ENCODE measurements at regions of chr1 and their contacts with region 1.

Region 1: GRCh38 chr1:186806477-186806876 is 22.3 kb upstream of the PLA2G4A start:
- DNase-seq: peak; percentile 70
- H3K4me3 Mint-ChIP-seq: no peak overlapping the region
- H3K27ac Mint-ChIP-seq: no peak overlapping the region
- H3K4me1 Mint-ChIP-seq: peaks cover 9% of the 10 kb centered on the region
- H3K27me3 Mint-ChIP-seq: no peaks in the 10 kb centered on the region
- CTCF ChIP-seq: peak; percentile 63

Region 2: GRCh38 chr1:186404454-186405051 is 401.9 kb before region 1 on chr1:
- CTCF ChIA-PET with region 1: interaction called, 5 read pairs
- intact Hi-C with region 1: loop called (anchors 10 kb)
- DNase-seq: peak; percentile 13
- H3K4me3 Mint-ChIP-seq: no peak overlapping the region
- H3K27ac Mint-ChIP-seq: no peak overlapping the region
- H3K4me1 Mint-ChIP-seq: no peaks in the 10 kb centered on the region
- H3K27me3 Mint-ChIP-seq: no peaks in the 10 kb centered on the region
- CTCF ChIP-seq: peak; percentile 59

Region 3: DNA sequence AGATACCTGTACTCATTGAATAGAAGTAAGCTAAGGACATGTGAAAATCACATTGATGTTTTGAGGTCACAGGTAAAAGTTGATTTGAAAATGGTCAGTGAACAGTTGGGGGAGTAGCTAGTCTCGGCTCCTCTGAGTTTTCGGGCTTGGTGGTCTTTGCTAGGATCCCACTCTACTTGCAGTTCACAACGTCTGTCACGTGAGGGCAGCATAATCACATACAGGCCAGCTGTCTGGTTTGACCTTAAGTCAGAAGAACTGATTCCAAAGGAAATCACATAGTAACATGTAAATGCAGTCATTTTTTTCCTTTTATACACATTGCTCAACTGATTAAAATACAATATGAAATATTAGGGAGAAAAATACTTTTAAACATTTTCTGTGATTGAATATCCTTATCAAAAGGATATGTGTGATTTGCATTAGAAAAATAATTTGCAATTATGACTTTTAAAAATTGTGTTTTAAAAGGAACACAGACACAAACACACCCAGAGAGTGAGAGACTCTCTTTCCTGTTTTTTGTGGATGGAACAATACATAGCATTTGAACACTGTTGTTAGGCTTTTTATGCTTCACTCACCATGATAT is 323.7 kb before region 1 on chr1:
- CTCF ChIA-PET with region 1: interaction called, 5 read pairs
- intact Hi-C with region 1: loop called (anchors 1 kb)
- DNase-seq: peak; percentile 78
- H3K4me3 Mint-ChIP-seq: no peak overlapping the region
- H3K27ac Mint-ChIP-seq: no peak overlapping the region
- H3K4me1 Mint-ChIP-seq: peaks cover 28% of the 10 kb centered on the region
- H3K27me3 Mint-ChIP-seq: no peaks in the 10 kb centered on the region
- CTCF ChIP-seq: peak; percentile 97

Region 4: GRCh38 chr1:186605762-186606350 is 200.6 kb before region 1 on chr1:
- CTCF ChIA-PET with region 1: interaction called, 22 read pairs
- intact Hi-C with region 1: loop called (anchors 1 kb)
- DNase-seq: peak; percentile 76
- H3K4me3 Mint-ChIP-seq: no peak overlapping the region
- H3K27ac Mint-ChIP-seq: peak overlapping the region; percentile 51
- H3K4me1 Mint-ChIP-seq: peaks cover 26% of the 10 kb centered on the region
- H3K27me3 Mint-ChIP-seq: no peaks in the 10 kb centered on the region
- CTCF ChIP-seq: peak; percentile 89

Region 5: DNA sequence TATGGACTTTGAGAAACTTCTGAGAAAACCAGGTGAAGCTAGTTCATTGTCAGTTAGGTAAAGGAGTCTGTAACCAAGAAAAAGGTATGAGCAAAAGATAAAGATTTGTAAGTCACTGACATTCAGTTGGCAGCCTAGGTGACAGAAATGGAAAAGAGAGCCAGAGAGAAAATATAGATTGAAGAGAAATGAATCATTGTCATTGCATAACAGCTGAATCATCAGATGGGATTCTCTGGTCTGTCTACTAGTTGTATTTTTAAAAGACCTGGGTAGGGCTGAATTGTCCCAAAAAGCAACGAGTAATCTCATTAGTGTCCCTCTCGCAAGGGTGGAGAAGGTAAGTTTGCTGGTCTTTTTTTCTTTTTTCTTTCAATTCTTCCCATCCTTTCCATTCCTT is 162.9 kb before region 1 on chr1:
- CTCF ChIA-PET with region 1: no interaction called
- intact Hi-C with region 1: no loop called
- DNase-seq: no peak
- H3K4me3 Mint-ChIP-seq: no peak overlapping the region
- H3K27ac Mint-ChIP-seq: peak overlapping the region; percentile 22
- H3K4me1 Mint-ChIP-seq: peaks cover 27% of the 10 kb centered on the region
- H3K27me3 Mint-ChIP-seq: no peaks in the 10 kb centered on the region
- CTCF ChIP-seq: no peak

Region 6: DNA sequence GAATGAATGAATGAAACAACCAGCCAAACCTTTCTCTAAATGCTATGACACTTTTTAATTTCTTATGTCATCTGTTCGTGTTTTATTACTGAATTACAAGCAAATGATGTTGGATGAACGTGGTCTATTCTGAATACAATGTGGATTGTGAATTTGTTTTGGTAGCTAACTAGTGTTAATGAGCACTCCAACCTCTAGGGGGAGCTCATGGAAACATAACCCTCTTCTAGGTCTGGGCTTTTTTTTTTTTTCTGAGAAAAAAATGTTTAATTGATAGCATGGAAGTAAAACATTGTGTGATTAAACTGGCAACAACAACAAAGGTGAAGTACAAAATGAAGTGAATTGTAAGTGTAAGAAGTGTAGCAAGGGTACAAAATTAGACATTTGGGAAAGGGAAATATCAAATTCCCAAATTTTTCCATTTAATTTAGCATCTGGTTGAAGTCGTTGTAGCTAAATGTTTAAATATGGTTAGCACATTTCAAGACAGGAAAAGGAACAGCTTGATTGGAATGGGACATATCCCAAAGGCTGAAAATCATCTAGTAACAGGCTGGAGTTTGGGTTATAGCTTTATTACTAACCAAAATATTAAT is 83.7 kb before region 1 on chr1:
- CTCF ChIA-PET with region 1: interaction called, 40 read pairs
- intact Hi-C with region 1: loop called (anchors 1 kb)
- DNase-seq: peak; percentile 58
- H3K4me3 Mint-ChIP-seq: no peak overlapping the region
- H3K27ac Mint-ChIP-seq: no peak overlapping the region
- H3K4me1 Mint-ChIP-seq: no peaks in the 10 kb centered on the region
- H3K27me3 Mint-ChIP-seq: no peaks in the 10 kb centered on the region
- CTCF ChIP-seq: peak; percentile 31

Region 7: GRCh38 chr1:186763107-186763506 is 43.4 kb before region 1 on chr1:
- CTCF ChIA-PET with region 1: no interaction called
- intact Hi-C with region 1: no loop called
- DNase-seq: no peak
- H3K4me3 Mint-ChIP-seq: no peak overlapping the region
- H3K27ac Mint-ChIP-seq: peak overlapping the region; percentile 7
- H3K4me1 Mint-ChIP-seq: peaks cover 23% of the 10 kb centered on the region
- H3K27me3 Mint-ChIP-seq: no peaks in the 10 kb centered on the region
- CTCF ChIP-seq: no peak

Region 8: GRCh38 chr1:186849271-186849671 is 42.8 kb after region 1 on chr1:
- CTCF ChIA-PET with region 1: no interaction called
- intact Hi-C with region 1: no loop called
- DNase-seq: peak; percentile 73
- H3K4me3 Mint-ChIP-seq: peak overlapping the region; percentile 37
- H3K27ac Mint-ChIP-seq: peak overlapping the region; percentile 88
- H3K4me1 Mint-ChIP-seq: peaks cover 39% of the 10 kb centered on the region
- H3K27me3 Mint-ChIP-seq: no peaks in the 10 kb centered on the region
- CTCF ChIP-seq: no peak

Region 9: DNA sequence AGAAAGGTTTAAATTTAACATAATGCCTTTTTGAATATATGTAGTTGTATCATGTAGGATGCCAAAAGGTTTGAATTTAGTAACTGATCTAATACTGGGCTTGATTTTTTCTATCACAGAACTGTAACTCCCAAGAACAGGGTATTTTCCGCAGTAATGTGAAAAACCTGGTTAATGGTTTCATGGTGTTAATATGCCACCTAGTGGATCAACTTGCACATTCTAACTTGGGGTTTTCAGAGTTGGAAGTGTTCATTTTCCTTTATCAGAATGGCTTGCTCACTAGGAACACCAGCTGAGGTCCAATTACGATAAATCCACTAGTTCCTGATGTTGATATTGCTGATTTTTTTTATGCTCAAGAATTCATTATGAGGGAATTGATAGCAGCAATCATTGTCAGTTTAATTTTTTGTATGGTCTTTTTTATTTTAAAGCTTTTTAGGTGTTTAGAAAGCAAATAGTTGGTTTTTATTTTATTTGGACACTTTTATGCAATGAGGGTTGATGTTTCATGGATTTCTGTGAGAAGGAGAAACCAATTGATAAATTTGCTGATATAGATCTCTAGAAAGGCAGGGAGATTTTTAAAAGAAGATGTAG is 179.5 kb after region 1 on chr1:
- CTCF ChIA-PET with region 1: no interaction called
- intact Hi-C with region 1: loop called (anchors 5 kb)
- DNase-seq: peak; percentile 35
- H3K4me3 Mint-ChIP-seq: no peak overlapping the region
- H3K27ac Mint-ChIP-seq: peak overlapping the region; percentile 37
- H3K4me1 Mint-ChIP-seq: peaks cover 19% of the 10 kb centered on the region
- H3K27me3 Mint-ChIP-seq: no peaks in the 10 kb centered on the region
- CTCF ChIP-seq: peak; percentile 60

Region 10: DNA sequence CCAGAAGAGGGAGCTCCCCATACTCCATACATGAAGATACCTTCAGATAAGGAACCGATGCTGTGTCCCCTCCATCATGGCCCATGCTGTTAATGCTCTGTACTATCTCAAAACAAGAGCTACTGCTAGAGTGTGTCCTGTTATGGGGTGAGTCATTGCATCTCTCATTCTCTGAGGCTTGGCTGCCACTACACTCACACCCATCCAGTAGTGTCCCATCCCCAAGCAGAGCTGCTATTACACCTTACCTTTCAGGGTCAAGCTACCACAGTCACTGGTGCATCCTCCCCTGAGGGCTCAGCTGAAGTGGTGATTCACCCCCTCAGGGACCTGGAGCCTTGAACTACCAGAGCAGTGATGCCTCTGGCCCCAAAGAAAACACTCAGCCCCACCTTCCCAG is 220.8 kb after region 1 on chr1:
- CTCF ChIA-PET with region 1: no interaction called
- intact Hi-C with region 1: no loop called
- DNase-seq: no peak
- H3K4me3 Mint-ChIP-seq: no peak overlapping the region
- H3K27ac Mint-ChIP-seq: no peak overlapping the region
- H3K4me1 Mint-ChIP-seq: no peaks in the 10 kb centered on the region
- H3K27me3 Mint-ChIP-seq: no peaks in the 10 kb centered on the region
- CTCF ChIP-seq: no peak

Measured in Calu3 (cell line).